K562 (cell line): ENCODE measurements at regions of chr5 and their contacts with region 1.

Region 1: GRCh38 chr5:151002250-151002649 is 18.1 kb upstream of the GPX3 start:
- DNase-seq: peak; percentile 36 to 61 (median 42)
- ATAC-seq: peak; percentile 79
- H3K4me3 ChIP-seq: no peak overlapping the region
- H3K27ac ChIP-seq: no peak overlapping the region
- H3K4me1 ChIP-seq: peaks cover 0 to 6% of the 10 kb centered on the region in 2 experiments; a peak in 3 of 5 replicates
- H3K27me3 ChIP-seq: 0 out of 5 replicates have a peak, but pooled peaks cover 0 to 5% of the 10 kb centered on the region in 2 experiments
- CTCF ChIP-seq: peak; percentile 56 to 82 (median 68); a peak in 5 of 6 replicates
- EP300 ChIP-seq: no peak
- POLR2A ChIP-seq: no peak
- RAD21 ChIP-seq: peak; percentile 88 to 96

Region 2: GRCh38 chr5:151051066-151051930 is 49.0 kb after region 1 on chr5:
- CTCF ChIA-PET with region 1: interaction called, 8 read pairs
- POLR2A ChIA-PET with region 1: no interaction called
- in situ Hi-C with region 1: no loop called
- intact Hi-C with region 1: loop called (anchors 1 kb)
- DNase-seq: peak; percentile 70 to 85 (median 78)
- ATAC-seq: peak; percentile 97
- H3K4me3 ChIP-seq: no peak overlapping the region
- H3K27ac ChIP-seq: no peak overlapping the region
- H3K4me1 ChIP-seq: no peaks in the 10 kb centered on the region
- H3K27me3 ChIP-seq: no peaks in the 10 kb centered on the region
- CTCF ChIP-seq: peak; percentile 94 to 98 (median 97)
- EP300 ChIP-seq: no peak
- POLR2A ChIP-seq: no peak
- RAD21 ChIP-seq: peak; percentile 96 to 99

Region 3: GRCh38 chr5:151068433-151069197 is 66.4 kb after region 1 on chr5:
- CTCF ChIA-PET with region 1: no interaction called
- POLR2A ChIA-PET with region 1: no interaction called
- in situ Hi-C with region 1: no loop called
- intact Hi-C with region 1: no loop called
- DNase-seq: no peak
- ATAC-seq: no peak
- H3K4me3 ChIP-seq: no peak overlapping the region
- H3K27ac ChIP-seq: no peak overlapping the region
- H3K4me1 ChIP-seq: peaks cover 2 to 11% of the 10 kb centered on the region in 2 experiments; a peak in 4 of 5 replicates
- H3K27me3 ChIP-seq: no peaks in the 10 kb centered on the region; a peak in 1 of 5 replicates
- CTCF ChIP-seq: no peak
- EP300 ChIP-seq: no peak
- POLR2A ChIP-seq: no peak
- RAD21 ChIP-seq: no peak

Region 4: DNA sequence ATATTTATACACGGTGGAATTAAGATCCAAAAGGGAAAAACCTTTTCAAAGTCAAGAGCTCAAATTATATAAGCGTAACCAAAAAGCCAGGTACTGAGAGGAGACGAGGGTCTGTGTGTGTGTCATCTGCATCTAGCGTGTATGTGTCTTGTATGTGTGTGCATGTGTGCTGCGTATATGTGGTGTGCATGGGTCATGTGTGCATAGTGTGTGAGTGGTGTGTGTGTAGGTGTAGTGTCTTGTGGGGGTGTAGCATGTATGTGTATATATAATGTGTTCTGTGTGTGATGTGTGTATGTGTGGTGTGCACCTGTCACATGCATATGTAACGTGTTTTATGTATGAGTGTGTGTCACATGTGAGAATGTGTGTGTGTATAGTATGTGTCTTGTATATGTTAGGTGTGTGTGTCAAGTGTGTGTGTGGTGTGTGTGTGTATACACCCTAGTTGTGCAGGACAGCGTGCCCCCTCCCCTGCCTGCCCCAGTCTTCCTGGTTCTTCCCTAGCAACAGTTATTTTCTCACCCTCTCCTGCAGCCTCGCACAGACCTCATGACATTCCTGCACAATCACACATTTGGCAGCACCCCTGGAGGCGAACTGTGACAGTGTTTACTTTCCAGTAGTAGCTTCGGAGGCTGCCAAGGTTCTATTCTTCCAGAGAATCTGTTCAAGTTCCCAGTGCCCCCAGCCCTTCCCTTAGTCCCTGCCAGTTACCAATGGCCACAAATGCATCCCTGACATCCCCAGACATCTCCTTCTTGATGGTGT is 105.7 kb after region 1 on chr5:
- CTCF ChIA-PET with region 1: no interaction called
- POLR2A ChIA-PET with region 1: no interaction called
- in situ Hi-C with region 1: no loop called
- intact Hi-C with region 1: loop called (anchors 2 kb)
- DNase-seq: no peak
- ATAC-seq: no peak
- H3K4me3 ChIP-seq: no peak overlapping the region
- H3K27ac ChIP-seq: no peak overlapping the region
- H3K4me1 ChIP-seq: peaks cover 0 to 5% of the 10 kb centered on the region in 2 experiments; a peak in 2 of 5 replicates
- H3K27me3 ChIP-seq: no peaks in the 10 kb centered on the region
- CTCF ChIP-seq: no peak
- EP300 ChIP-seq: no peak
- POLR2A ChIP-seq: no peak
- RAD21 ChIP-seq: no peak

Region 5: GRCh38 chr5:151115274-151115905 is 113.1 kb after region 1 on chr5:
- CTCF ChIA-PET with region 1: interaction called, 31 read pairs
- POLR2A ChIA-PET with region 1: no interaction called
- in situ Hi-C with region 1: loop called (anchors 5 kb)
- intact Hi-C with region 1: loop called (anchors 1 kb)
- DNase-seq: peak; percentile 76 to 84 (median 80)
- ATAC-seq: peak; percentile 80
- H3K4me3 ChIP-seq: no peak overlapping the region
- H3K27ac ChIP-seq: no peak overlapping the region
- H3K4me1 ChIP-seq: no peaks in the 10 kb centered on the region; a peak in 1 of 5 replicates
- H3K27me3 ChIP-seq: no peaks in the 10 kb centered on the region
- CTCF ChIP-seq: peak; percentile 95 to 97 (median 95)
- EP300 ChIP-seq: no peak
- POLR2A ChIP-seq: no peak
- RAD21 ChIP-seq: peak; percentile 99 to 100

Region 6: GRCh38 chr5:151239237-151239861 is 237.1 kb after region 1 on chr5:
- CTCF ChIA-PET with region 1: no interaction called
- POLR2A ChIA-PET with region 1: no interaction called
- in situ Hi-C with region 1: no loop called
- intact Hi-C with region 1: loop called (anchors 2 kb)
- DNase-seq: peak; percentile 75 to 83 (median 78)
- ATAC-seq: peak; percentile 95
- H3K4me3 ChIP-seq: no peak overlapping the region
- H3K27ac ChIP-seq: no peak overlapping the region
- H3K4me1 ChIP-seq: peaks cover 0 to 6% of the 10 kb centered on the region in 2 experiments; a peak in 3 of 5 replicates
- H3K27me3 ChIP-seq: peaks cover 0 to 22% of the 10 kb centered on the region in 2 experiments; a peak in 3 of 5 replicates
- CTCF ChIP-seq: peak; percentile 91 to 94 (median 92)
- EP300 ChIP-seq: no peak
- POLR2A ChIP-seq: no peak
- RAD21 ChIP-seq: peak; percentile 85 to 90